Dorsolateral prefrontal cortex (tissue), 120 donors: ENCODE measurements at regions of chr6 and their contacts with region 1.

Region 1: GRCh38 chr6:53359072-53359842 is 10.5 kb upstream of the ELOVL5 start:
- DNase-seq: peak; percentile 93 to 99 (median 96)
- H3K4me3 ChIP-seq: peak overlapping the region; percentile 58 to 93 (median 79)
- H3K27ac ChIP-seq: peak overlapping the region; percentile 89 to 100 (median 98)
- H3K27me3 ChIP-seq: no peaks in the 10 kb centered on the region
- CTCF ChIP-seq: peak in 33 of 56 donors; percentile 12 to 60 (median 26)

Region 2: GRCh38 chr6:53070806-53071205 is 288.5 kb before region 1 on chr6:
- intact Hi-C with region 1: no loop called
- DNase-seq: no peak
- H3K4me3 ChIP-seq: no peak overlapping the region
- H3K27ac ChIP-seq: peak overlapping the region in 1 of 59 donors; percentile 18
- H3K27me3 ChIP-seq: no peaks in the 10 kb centered on the region
- CTCF ChIP-seq: peak in 21 of 56 donors; percentile 8 to 56 (median 29)

Region 3: DNA sequence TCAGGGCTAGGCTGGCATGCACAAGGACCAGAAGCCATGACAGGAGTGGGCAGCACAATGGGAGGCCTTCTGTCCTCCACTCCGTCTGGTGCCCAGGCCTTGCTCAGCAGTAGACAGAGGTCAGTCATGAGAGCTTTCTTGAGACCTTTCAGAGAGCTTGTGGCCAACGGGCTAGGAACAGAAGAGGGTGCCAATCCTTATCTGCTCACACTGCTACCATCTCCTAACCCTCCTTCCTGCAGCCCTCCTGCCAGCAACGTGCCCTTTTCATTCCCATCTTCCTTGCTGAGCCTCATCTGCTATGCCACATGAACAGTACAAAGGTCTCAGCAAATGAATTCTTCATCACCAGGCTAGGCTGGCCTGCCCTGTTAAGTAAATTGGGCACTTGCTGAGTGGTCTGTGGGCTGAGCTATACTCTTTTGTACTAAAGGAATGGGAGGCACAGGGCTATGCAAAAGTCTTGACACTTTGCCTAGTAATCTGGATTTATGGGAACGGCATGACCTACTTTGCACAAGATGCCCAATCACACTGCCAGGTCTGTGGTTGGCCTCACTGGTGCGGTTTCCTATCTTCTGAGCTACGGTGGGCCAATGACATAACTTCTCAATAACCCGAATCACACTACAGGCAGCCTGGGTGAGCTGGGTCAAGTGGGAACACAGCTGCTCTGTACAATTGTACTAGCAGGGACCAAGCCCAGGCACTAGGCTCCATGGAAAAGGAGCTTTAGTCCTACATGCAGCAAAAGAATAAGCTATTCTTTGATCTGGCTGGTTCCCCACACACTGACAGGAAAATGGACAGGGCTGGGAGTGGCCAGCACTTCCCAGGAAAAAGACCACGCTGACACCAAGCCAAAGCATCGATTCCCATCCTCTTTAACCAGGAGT is 58.4 kb before region 1 on chr6:
- intact Hi-C with region 1: loop called in 1 of 2 experiments (anchors 5 kb)
- DNase-seq: peak in 9 of 10 donors; percentile 37 to 73 (median 62)
- H3K4me3 ChIP-seq: peak overlapping the region in 8 of 59 donors; percentile 1 to 36 (median 11)
- H3K27ac ChIP-seq: peak overlapping the region; percentile 49 to 97 (median 91)
- H3K27me3 ChIP-seq: no peaks in the 10 kb centered on the region
- CTCF ChIP-seq: peak in 5 of 56 donors; percentile 8 to 16 (median 11)

Region 4: DNA sequence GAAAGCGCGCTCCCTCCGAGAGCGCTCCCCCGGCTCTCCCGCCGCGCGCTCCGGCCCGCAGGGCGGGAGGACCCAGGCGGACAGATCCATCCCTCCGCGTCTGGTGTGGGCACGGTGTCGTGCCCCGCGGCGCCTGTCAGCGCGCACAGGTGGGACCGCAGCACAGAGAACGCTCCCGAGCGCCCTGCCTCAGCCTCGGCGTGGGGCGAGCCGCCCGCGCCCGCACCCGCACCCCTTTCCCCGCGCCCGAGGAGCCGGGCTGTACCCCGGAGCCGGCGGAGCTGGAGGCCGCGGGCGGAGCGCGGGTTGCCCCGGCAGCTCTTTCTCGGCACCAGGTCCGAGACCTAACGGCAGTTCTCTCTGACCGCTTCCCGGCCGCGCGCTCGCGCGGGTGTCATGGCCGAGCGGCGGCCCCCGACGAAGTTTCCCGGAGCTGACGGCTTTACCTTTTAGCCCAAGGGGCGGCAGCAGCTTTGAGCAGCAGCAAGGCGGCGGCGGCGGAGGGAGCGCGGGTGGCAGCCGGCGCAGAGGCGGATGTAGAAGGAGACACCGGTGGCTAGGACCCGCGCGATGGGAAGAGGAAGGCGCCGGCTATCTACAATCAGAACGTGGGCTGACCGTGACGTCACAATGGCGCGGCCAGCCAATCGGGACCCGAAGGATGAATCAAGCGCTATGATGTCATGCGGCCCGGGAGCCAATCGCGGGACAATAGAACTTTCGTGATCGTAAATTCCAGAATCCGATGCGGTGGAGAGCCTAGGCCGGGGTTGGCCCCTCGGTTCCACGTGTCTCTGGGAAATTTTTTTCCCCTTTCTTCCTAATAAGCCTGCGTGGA is 10.7 kb before region 1 on chr6 and contains the start of gene ELOVL5:
- intact Hi-C with region 1: loop called (anchors 1 kb)
- DNase-seq: peak; percentile 95 to 100 (median 99)
- H3K4me3 ChIP-seq: peak within 1 kb of the TSS; percentile 64 to 100 (median 94)
- H3K27ac ChIP-seq: peak within 1 kb of the TSS; percentile 79 to 99 (median 98)
- H3K27me3 ChIP-seq: no peaks in the 10 kb centered on the region
- CTCF ChIP-seq: peak in 11 of 56 donors; percentile 5 to 19 (median 11)
- total RNA-seq, gene ELOVL5: 39.4 to 153 (median 66.8) TPM

Region 5: GRCh38 chr6:53391170-53391569 is 31.9 kb after region 1 on chr6:
- intact Hi-C with region 1: no loop called
- DNase-seq: no peak
- H3K4me3 ChIP-seq: no peak overlapping the region
- H3K27ac ChIP-seq: no peak overlapping the region
- H3K27me3 ChIP-seq: no peaks in the 10 kb centered on the region
- CTCF ChIP-seq: no peak

Region 6: GRCh38 chr6:53410508-53411258 is 51.4 kb after region 1 on chr6:
- intact Hi-C with region 1: loop called in 1 of 2 experiments (anchors 10 kb)
- DNase-seq: peak in 4 of 10 donors; percentile 10 to 51 (median 35)
- H3K4me3 ChIP-seq: peak overlapping the region in 3 of 59 donors; percentile 1 to 21 (median 19)
- H3K27ac ChIP-seq: peak overlapping the region in 1 of 59 donors; percentile 0
- H3K27me3 ChIP-seq: peaks cover 0 to 7% (median 0%) of the 10 kb centered on the region in 45 donors
- CTCF ChIP-seq: peak; percentile 18 to 85 (median 64)

Region 7: DNA sequence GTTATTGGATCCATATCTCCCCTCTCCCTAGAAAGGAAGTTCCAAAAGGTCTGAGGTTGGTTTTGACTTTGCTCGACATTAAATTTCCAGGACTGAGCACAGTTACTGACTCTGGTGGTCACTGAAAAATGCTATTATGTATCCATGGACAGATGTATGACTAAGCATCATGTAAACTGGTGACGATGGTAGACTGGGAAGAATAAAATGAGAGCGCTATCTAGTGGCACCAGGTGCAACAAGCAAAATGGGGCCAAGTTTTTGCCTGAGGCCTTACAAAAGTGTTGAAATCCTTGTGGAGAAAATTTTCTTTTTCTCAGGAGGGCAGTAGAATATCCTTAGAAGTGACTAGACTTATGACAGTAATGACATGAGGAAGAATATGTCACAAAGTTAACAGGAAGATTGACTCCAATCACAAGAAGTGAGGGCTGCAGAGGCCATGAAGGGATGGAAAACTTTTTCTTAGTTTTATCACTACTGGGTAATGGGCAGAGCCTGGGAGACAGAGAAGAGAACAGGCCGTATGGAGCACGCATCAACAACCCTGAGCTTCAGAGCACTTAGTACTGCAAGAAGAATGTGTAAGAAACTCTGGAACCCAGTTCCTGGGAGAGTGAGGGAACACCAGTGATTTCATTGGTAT is 78.4 kb after region 1 on chr6:
- intact Hi-C with region 1: loop called (anchors 5 kb)
- DNase-seq: peak in 2 of 10 donors; percentile 36 to 38
- H3K4me3 ChIP-seq: no peak overlapping the region
- H3K27ac ChIP-seq: peak overlapping the region in 57 of 59 donors; percentile 20 to 97 (median 88)
- H3K27me3 ChIP-seq: peaks cover 0 to 2% (median 0%) of the 10 kb centered on the region in 45 donors
- CTCF ChIP-seq: peak in 55 of 56 donors; percentile 35 to 84 (median 67)

Region 8: DNA sequence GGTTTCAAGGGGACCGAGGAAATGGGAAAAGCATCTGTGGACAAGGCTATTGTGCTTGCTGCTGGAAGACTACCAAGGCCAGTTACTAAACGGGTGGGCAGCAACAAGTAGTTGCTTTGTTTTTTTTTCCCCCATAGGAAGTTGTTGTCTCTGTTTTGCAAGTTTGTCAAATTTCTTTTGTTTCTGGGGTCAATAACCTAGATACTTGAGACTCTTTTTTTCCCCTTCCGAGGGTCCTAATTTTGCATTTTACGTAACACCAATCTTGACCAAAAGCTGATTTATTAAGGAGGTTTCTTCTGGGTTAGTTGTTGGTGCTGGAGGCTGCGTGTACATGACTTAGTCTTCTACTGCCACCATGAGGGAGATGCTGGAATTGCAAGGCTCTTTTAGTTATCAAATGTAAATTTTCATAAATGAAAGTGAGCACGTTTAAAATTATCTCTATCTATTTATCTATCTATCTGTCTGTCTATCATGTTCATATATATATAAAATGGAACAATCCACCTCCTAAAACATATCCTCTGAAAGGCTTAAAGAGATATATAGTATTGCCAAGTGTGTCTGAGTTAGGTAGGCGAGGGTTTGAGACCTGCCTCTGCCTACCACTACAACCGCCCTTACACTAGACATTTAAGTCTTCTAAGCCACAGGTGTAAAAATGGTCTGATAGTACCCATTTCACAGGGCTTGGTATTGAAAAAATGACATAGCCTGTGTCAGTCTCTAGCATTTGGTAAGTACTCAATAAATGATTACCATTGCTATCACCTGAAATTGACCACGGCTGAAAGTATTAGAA is 125.4 kb after region 1 on chr6:
- intact Hi-C with region 1: loop called (anchors 5 kb)
- DNase-seq: peak in 6 of 10 donors; percentile 50 to 89 (median 66)
- H3K4me3 ChIP-seq: peak overlapping the region in 44 of 59 donors; percentile 1 to 59 (median 34)
- H3K27ac ChIP-seq: peak overlapping the region; percentile 16 to 95 (median 82)
- H3K27me3 ChIP-seq: no peaks in the 10 kb centered on the region
- CTCF ChIP-seq: peak; percentile 89 to 100 (median 98)